ENCODE measurements at regions of chr6 and their contacts with region 1.

Region 1: DNA sequence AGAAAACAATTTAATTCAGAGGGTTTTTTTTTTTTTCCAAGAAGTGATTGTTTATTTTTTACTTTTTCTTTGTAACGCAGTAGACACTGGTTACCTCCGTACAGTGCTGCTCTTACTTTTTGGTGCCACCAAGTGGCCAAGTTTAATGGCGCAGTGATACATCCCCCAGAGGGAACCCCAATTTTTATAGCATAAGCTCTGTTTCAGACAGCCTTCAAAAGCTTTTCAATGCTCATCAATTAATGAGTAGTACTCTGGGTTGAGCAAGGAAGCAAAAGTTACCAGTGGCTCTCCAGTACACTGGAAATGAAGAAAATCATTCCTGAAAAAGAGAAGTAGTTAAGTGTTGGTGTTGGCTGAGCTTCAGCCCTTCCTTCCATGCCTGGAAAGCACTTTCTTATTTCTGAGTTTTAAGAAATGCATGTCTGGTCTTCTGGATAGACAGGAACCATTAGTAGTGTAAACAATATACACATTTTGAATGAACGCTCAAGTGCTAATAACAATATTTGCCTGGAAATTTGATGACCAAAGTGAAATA is 129.1 kb upstream of the SMLR1 start:
- DNase-seq: peak; percentile 57
- ATAC-seq: peak; percentile 99
- H3K4me3 Mint-ChIP-seq: no peak overlapping the region
- H3K27ac Mint-ChIP-seq: no peak overlapping the region
- H3K4me1 Mint-ChIP-seq: peaks cover 10% of the 10 kb centered on the region; the same call in 1 of the 2 replicates
- H3K27me3 Mint-ChIP-seq: no peaks in the 10 kb centered on the region
- CTCF ChIP-seq: peak; percentile 52; the same call in 1 of the 2 replicates

Region 2: DNA sequence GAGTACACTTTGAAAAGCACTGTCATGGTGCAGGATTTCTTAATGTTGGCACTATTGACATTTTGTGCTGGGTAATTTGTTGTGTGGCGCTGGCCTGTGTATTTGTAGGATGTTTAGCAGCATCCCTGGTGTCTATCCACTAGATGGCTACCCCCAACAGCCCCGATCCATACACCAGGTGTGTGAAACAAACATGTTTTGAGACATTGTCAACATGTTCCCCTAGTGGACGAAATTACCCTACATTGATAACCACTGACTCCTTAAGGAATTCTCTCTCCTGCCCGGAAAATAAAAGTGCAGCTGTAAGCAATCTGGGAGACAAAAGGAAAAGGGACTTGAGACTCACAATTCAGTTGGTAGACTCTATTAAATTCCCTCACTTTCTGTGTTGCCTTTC is 384.9 kb before region 1 on chr6:
- CTCF ChIA-PET with region 1: interaction called, 12 read pairs
- POLR2A ChIA-PET with region 1: no interaction called
- DNase-seq: no peak
- ATAC-seq: peak; percentile 78
- H3K4me3 Mint-ChIP-seq: no peak overlapping the region
- H3K27ac Mint-ChIP-seq: no peak overlapping the region
- H3K4me1 Mint-ChIP-seq: no peaks in the 10 kb centered on the region
- H3K27me3 Mint-ChIP-seq: no peaks in the 10 kb centered on the region
- CTCF ChIP-seq: no peak

Region 3: DNA sequence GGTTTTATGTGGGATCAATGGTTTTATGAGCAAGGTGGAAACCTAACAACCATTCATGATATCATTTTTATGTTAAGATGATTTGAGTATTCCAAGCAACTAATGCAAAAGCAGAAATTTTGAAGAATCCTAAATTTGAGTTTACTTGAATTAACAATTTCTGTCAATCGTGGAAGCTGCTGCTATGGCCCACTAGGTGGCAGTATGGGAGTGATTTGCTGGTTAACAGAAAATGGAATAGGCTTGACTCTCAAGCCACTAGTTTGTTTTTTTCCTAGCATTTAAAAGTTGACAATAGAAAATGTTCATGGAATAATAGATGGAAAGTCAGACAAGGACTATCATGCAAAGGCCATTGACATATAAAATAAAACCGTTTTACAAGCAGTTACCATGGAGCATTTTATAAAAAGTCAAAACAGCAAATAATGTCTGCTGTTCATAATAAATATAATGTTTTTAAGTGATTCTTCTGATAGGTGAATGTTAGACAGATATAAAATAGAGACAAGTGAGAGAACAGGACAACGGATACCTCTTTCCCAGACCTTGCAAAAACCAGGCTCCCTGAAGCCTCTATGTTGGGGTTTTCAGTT is 375.3 kb before region 1 on chr6:
- CTCF ChIA-PET with region 1: interaction called, 22 read pairs
- POLR2A ChIA-PET with region 1: no interaction called
- DNase-seq: peak; percentile 23
- ATAC-seq: peak; percentile 64
- H3K4me3 Mint-ChIP-seq: no peak overlapping the region
- H3K27ac Mint-ChIP-seq: no peak overlapping the region
- H3K4me1 Mint-ChIP-seq: no peaks in the 10 kb centered on the region
- H3K27me3 Mint-ChIP-seq: no peaks in the 10 kb centered on the region
- CTCF ChIP-seq: peak; percentile 53

Region 4: GRCh38 chr6:130365166-130366106 is 332.6 kb before region 1 on chr6 and contains the start of gene TMEM200A:
- CTCF ChIA-PET with region 1: interaction called, 15 read pairs
- POLR2A ChIA-PET with region 1: no interaction called
- DNase-seq: peak; percentile 90
- ATAC-seq: peak; percentile 77
- H3K4me3 Mint-ChIP-seq: peak within 1 kb of the TSS; percentile 88
- H3K27ac Mint-ChIP-seq: peak within 1 kb of the TSS; percentile 31; the same call in 1 of the 2 replicates
- H3K4me1 Mint-ChIP-seq: peaks cover 39% of the 10 kb centered on the region
- H3K27me3 Mint-ChIP-seq: peaks cover 2% of the 10 kb centered on the region; the same call in 1 of the 2 replicates
- CTCF ChIP-seq: peak; percentile 73
- total RNA-seq, gene TMEM200A: 10.4 to 11.2 TPM (median 11.0 TPM) in 3 replicates

Region 5: GRCh38 chr6:130716466-130716865 is 18.4 kb after region 1 on chr6:
- CTCF ChIA-PET with region 1: interaction called, 12 read pairs
- POLR2A ChIA-PET with region 1: no interaction called
- DNase-seq: no peak
- ATAC-seq: no peak
- H3K4me3 Mint-ChIP-seq: no peak overlapping the region
- H3K27ac Mint-ChIP-seq: no peak overlapping the region
- H3K4me1 Mint-ChIP-seq: peaks cover 37% of the 10 kb centered on the region
- H3K27me3 Mint-ChIP-seq: peaks cover 3% of the 10 kb centered on the region; the same call in 1 of the 2 replicates
- CTCF ChIP-seq: no peak

Region 6: DNA sequence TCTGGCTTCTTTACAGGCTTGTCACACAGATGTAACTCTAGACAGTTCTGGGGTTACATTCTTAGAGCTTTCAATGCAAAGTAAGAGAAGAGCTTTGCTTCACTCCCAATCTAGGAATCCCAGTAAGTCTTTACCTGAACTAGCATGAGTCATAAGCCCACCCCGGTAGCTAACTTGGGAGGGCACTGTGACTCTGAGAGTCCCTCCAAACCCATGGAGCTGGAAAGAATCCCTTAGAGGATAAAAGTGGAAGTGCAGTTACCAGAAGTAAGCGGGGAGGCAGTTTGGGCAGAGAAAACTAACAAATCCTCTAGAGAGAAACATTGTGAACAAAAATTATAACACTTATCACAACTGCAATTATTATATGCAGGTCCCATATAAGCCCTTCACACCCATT is 45.1 kb after region 1 on chr6:
- CTCF ChIA-PET with region 1: interaction called, 18 read pairs
- POLR2A ChIA-PET with region 1: no interaction called
- DNase-seq: peak; percentile 35
- ATAC-seq: peak; percentile 100
- H3K4me3 Mint-ChIP-seq: no peak overlapping the region
- H3K27ac Mint-ChIP-seq: no peak overlapping the region; the same call in 1 of the 2 replicates
- H3K4me1 Mint-ChIP-seq: peaks cover 15% of the 10 kb centered on the region
- H3K27me3 Mint-ChIP-seq: no peaks in the 10 kb centered on the region
- CTCF ChIP-seq: no peak

Measured in WTC11 (cell line).